Psoas muscle (tissue), 8 donors: ENCODE measurements at regions of chrX and their contacts with region 1.

Region 1: DNA sequence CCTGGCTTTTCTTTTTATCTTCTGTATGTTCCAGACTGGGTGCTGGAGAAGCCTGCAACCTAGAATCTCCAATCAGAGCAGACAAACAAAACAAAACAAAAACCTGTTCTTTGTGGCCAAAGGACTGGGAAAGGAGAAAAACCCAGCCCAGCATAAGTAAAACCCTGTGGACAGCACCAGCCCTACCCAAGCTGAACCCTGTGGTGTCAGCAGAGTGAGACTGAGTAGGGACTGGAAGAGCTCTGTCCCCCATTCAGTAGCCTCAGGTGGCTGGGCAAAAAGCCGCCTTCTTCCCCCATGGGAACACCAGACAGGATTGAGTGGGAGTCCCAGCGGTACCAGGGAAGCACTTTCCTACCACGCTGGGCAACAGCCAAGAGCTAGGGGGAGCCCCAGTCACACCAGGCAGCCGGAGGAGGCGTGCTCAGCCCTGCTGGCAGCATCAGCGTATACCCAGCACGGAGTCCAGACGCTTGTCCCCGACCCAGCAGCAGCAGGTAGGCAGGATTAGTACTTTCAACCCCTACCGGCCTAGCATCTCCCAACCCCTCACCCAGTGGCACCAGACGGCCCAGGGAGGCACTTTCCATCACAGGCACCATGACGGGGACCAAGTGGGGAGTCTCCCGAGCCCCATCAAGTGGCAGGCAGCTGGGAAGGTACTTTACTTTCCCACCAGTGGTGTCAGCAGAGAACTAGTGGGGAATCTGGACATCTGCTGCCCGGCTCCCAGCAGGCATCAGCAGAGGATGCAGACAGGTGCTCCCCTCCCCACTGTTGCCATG is 8.6 kb upstream of the JADE3 start:
- DNase-seq: peak; percentile 75 to 84
- ATAC-seq: peak; percentile 80 to 99 (median 96)
- H3K4me3 ChIP-seq: peak overlapping the region; percentile 52
- H3K27ac ChIP-seq: no peak overlapping the region
- H3K4me1 ChIP-seq: no peaks in the 10 kb centered on the region
- H3K27me3 ChIP-seq: peaks cover 0 to 22% (median 0%) of the 10 kb centered on the region in 3 donors
- CTCF ChIP-seq: peak; percentile 48

Region 2: DNA sequence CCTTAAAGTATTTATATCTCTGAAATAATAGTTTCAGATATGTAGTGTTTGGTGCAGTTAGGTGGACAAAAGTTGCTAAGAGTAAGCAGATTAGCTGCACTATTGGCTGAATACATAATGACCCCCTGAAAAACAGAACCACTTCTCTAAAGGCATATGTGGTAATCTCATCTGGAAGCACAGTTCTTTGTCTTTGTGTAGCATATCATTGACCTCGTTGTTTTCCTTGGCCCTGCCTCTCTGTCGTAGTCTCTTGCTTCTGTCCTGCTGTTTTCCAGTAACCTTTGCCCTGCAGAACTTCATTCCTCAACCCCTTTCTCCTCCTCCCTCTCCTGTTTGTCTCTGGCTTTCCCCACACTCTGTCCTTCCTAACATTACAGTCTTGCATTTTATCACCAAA is 49.9 kb after region 1 on chrX:
- intact Hi-C with region 1: no loop called
- DNase-seq: no peak
- ATAC-seq: no peak
- H3K4me3 ChIP-seq: no peak overlapping the region
- H3K27ac ChIP-seq: no peak overlapping the region
- H3K4me1 ChIP-seq: no peaks in the 10 kb centered on the region
- H3K27me3 ChIP-seq: peaks cover 0 to 4% (median 0%) of the 10 kb centered on the region in 3 donors
- CTCF ChIP-seq: no peak

Region 3: GRCh38 chrX:46978341-46979291 is 75.0 kb after region 1 on chrX:
- intact Hi-C with region 1: loop called in 1 of 2 experiments (anchors 5 kb)
- DNase-seq: peak; percentile 65 to 72
- ATAC-seq: peak in 1 of 4 donors; percentile 40
- H3K4me3 ChIP-seq: no peak overlapping the region
- H3K27ac ChIP-seq: no peak overlapping the region
- H3K4me1 ChIP-seq: no peaks in the 10 kb centered on the region
- H3K27me3 ChIP-seq: no peaks in the 10 kb centered on the region
- CTCF ChIP-seq: peak; percentile 57

Region 4: GRCh38 chrX:47030339-47030738 is 126.7 kb after region 1 on chrX:
- intact Hi-C with region 1: loop called in 1 of 2 experiments (anchors 5 kb)
- DNase-seq: no peak
- ATAC-seq: no peak
- H3K4me3 ChIP-seq: no peak overlapping the region
- H3K27ac ChIP-seq: no peak overlapping the region
- H3K4me1 ChIP-seq: no peaks in the 10 kb centered on the region
- H3K27me3 ChIP-seq: peaks cover 0 to 11% (median 0%) of the 10 kb centered on the region in 3 donors
- CTCF ChIP-seq: peak; percentile 62